Testis (tissue), 5 donors: ENCODE measurements at regions of chr13 and their contacts with region 1.

Region 1: DNA sequence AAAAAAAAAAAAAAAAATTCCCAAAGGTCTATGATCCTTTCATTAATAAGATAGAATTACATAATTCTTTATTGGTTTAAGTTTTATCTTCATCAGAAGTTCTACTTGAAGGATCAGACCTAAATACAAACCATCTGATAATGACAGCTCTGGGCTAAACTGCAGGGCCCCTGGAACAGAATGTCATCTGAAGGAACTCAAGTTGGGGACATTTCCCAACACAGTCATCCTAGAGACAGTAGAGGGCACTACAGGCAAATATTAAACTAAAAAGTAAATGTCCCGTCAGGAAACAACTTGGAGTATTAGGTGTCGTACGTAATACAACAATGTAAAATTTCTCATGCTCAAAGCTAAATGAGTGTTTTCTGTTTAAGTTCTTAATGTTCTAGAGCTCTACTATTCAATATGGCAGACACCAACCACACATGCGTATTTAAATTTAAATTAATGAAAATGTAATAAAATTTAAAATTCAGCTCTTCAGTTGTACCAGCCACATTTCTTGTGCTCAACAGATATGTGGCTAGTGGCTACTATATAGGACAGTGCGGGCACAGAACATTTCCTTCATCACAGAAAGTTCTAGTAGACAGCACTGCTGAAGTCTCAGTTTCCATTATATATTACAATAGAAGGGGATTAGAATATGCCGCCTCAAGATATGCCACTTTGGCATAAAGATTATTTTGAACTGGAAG is 21.8 kb upstream of the NAXD start:
- DNase-seq: no peak
- H3K4me3 ChIP-seq: no peak overlapping the region
- H3K27ac ChIP-seq: no peak overlapping the region
- H3K4me1 ChIP-seq: no peaks in the 10 kb centered on the region
- H3K27me3 ChIP-seq: no peaks in the 10 kb centered on the region
- CTCF ChIP-seq: peak; percentile 43 to 68 (median 61)
- POLR2A ChIP-seq: no peak

Region 2: DNA sequence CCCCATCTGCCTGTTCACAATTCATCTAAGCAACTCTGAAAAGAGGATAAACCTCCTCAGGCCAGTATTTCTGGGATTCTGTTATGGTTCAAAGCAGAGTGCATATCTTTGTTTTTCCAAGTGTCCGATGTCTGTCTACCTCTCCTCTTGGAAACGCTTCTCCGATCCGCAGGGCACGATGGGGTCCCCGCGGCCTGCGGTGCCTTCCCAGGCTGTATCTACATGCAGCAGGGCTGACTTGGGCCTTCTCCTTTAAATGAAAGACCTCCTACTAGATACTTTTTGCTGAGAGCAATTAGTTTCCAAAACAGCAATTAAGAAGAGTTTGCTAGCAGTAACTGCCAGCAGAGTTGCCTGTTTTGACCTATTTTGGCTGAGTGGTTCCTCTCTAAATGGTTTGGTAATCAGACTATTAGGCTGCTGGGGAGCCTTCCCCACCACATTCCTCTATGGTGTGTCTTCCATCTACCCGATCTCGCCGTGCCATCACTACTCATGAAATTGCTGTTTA is 263.0 kb before region 1 on chr13:
- intact Hi-C with region 1: no loop called
- DNase-seq: no peak
- H3K4me3 ChIP-seq: no peak overlapping the region
- H3K27ac ChIP-seq: peak overlapping the region; percentile 14 to 66
- H3K4me1 ChIP-seq: peaks cover 6% of the 10 kb centered on the region
- H3K27me3 ChIP-seq: no peaks in the 10 kb centered on the region
- CTCF ChIP-seq: no peak
- POLR2A ChIP-seq: no peak

Region 3: GRCh38 chr13:110471833-110472162 is 121.8 kb before region 1 on chr13:
- intact Hi-C with region 1: no loop called
- DNase-seq: peak; percentile 44
- H3K4me3 ChIP-seq: no peak overlapping the region
- H3K27ac ChIP-seq: no peak overlapping the region
- H3K4me1 ChIP-seq: no peaks in the 10 kb centered on the region
- H3K27me3 ChIP-seq: no peaks in the 10 kb centered on the region
- CTCF ChIP-seq: no peak
- POLR2A ChIP-seq: no peak

Region 4: DNA sequence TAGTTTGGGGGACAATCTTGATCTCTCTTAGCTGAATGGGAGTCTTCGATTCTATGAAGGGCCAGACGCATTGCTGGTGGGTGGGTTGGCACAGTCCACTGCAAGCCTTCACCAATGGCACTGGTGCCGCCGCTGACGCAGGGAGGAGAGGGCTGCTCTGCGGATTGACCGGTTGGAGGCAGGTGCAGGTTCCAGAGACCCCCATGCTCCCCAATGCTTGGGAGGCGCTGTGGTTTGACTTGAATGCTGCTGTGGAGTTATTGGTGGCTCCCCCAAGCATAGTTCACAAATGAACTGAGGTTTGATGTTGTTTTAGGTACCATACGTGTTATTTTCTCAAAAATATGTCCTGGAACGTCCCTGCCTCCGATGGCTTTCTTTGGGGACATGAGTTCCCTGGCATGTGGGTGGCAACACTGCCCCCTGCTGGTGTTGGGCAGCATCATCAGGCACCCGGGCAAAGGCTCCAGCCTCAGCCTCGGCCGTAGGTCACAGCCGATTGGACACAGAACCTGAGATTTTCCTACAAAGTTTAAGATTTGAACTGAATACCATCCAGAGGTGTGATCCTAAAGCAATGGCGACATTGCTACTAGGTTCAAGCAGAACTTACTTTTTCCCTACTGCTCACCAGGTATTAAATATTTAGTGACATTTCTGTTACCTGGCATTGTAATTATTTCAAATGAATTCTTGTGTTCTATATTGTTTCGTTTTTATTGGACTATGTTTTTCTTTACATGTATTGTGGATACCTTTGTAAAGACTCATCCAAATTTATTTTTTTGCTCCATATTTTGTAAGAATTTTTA is 225.8 kb after region 1 on chr13:
- intact Hi-C with region 1: loop called (anchors 10 kb)
- DNase-seq: peak; percentile 88
- H3K4me3 ChIP-seq: no peak overlapping the region
- H3K27ac ChIP-seq: no peak overlapping the region
- H3K4me1 ChIP-seq: no peaks in the 10 kb centered on the region
- H3K27me3 ChIP-seq: no peaks in the 10 kb centered on the region
- CTCF ChIP-seq: peak; percentile 89 to 97 (median 96)
- POLR2A ChIP-seq: no peak

Region 5: DNA sequence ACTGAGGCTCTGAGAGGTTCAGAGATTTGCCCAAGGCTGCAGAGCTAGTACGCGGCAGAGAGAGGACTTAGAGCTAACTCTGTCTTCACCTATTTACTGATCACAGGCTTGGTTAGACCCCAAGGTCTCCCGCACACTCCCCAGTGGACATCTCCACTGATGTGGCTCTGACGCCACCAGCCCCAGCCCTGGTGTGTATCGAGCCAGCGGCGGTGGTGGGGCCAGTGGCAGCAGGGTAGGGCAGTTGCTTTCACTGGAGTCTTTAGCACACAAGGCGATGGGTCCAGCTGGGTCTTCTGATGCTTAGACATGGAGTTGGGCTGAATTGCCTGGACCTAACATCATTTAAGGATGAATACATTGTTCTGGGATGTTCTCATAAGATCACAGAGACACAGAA is 235.9 kb after region 1 on chr13:
- intact Hi-C with region 1: no loop called
- DNase-seq: no peak
- H3K4me3 ChIP-seq: no peak overlapping the region
- H3K27ac ChIP-seq: no peak overlapping the region
- H3K4me1 ChIP-seq: peaks cover 12% of the 10 kb centered on the region
- H3K27me3 ChIP-seq: no peaks in the 10 kb centered on the region
- CTCF ChIP-seq: no peak
- POLR2A ChIP-seq: no peak

Region 6: GRCh38 chr13:111046590-111047141 is 453.1 kb after region 1 on chr13:
- intact Hi-C with region 1: loop called (anchors 10 kb)
- DNase-seq: no peak
- H3K4me3 ChIP-seq: no peak overlapping the region
- H3K27ac ChIP-seq: no peak overlapping the region
- H3K4me1 ChIP-seq: no peaks in the 10 kb centered on the region
- H3K27me3 ChIP-seq: no peaks in the 10 kb centered on the region
- CTCF ChIP-seq: peak in 1 of 3 experiments; percentile 14
- POLR2A ChIP-seq: no peak

Region 7: DNA sequence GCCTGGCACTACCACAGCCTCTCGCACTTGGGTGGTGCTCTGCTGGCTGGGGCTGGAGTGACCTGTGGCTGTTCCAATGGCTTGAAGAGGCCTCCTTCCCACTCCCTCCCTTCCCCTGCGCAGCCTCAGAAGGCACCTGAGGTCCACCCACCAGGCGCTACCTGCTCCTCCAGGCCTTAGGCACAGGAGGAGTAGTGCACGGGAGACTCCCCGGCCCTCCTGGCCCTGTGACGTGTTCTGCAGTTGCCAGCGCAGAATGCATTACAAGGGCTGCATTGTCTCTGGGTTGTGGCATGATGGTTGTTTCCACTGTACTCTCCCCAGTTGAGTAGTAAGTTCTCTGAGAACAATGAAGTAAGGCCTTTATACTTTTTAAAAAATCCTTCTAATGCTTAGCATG is 855.5 kb after region 1 on chr13:
- intact Hi-C with region 1: no loop called
- DNase-seq: peak; percentile 71
- H3K4me3 ChIP-seq: no peak overlapping the region
- H3K27ac ChIP-seq: peak overlapping the region in 1 of 2 donors; percentile 44
- H3K4me1 ChIP-seq: peaks cover 4% of the 10 kb centered on the region
- H3K27me3 ChIP-seq: no peaks in the 10 kb centered on the region
- CTCF ChIP-seq: no peak
- POLR2A ChIP-seq: no peak